Prostate gland (tissue), 2 donors: ENCODE measurements at regions of chr3 and their contacts with region 1.

Region 1: DNA sequence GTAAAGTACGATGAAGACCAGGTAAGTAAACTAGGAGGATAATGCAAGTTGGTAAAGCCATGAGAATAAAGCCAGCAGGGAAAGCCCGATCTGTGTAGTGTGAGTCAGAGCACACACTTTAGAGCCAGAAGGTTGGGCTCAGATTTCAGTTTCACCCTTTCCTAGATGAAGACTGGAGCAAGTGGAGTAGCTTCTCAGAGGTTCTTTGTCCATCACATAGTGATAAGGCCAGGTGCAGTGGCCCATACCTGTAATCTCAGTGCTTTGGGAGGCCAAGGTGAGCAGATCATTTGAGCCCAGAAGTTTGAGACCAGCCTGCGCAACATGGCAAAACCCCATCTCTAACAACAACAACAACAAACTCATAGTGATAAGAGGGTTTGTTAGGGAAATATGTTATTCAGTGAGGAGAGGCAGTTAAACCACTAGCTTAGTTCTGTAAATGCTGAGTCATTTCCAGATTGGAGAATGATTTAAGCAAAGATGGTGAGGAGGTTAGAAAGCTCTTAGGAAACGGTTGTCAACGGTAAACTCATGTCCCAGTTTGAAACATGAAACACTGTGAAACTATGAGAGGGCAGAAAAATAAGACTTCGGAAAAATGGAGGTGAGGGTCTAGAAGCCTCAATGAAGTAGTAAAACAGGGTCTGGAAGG is 39.0 kb downstream of the IL12A start:
- DNase-seq: no peak
- H3K4me3 ChIP-seq: no peak overlapping the region
- H3K27ac ChIP-seq: no peak overlapping the region
- H3K4me1 ChIP-seq: no peaks in the 10 kb centered on the region
- H3K27me3 ChIP-seq: no peaks in the 10 kb centered on the region
- CTCF ChIP-seq: no peak
- POLR2A ChIP-seq: no peak

Region 2: DNA sequence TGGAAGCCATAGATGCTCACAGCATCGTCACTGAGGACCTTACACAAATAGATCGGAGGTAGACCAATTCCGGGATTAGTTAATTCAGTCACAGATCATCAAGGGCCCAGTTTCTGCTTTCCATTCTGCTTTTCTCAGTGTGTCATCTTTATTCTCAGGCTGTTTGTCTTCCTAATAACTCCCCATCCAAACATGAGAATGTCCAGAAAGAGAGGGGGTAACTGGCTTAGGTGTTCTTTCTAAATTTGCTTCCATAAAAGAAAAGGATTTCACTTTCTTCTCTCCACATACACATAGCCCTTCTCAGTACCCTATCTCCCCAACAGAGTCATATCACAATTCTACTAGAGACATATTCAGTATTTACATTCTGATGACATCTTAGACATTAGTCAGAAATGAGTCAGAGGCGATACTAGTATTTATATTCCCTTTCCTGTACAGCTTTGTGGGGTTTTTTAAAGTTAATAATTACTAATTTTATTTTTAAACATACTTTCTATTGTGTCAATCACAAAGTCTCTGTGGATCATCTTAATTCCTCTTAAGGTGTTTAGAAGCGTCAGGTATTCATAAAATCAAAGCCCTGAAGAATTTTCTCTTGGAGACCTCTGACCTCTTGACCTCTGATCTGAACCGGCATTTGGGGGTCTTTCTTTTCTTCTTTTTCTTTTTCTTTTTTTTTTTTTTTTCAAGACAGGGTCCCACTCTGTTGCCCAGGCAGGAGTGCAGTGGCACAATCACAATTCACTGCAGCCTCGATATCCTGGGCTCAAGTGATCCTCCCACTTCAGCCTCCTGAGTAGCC is 63.3 kb before region 1 on chr3:
- intact Hi-C with region 1: no loop called
- DNase-seq: no peak
- H3K4me3 ChIP-seq: no peak overlapping the region
- H3K27ac ChIP-seq: no peak overlapping the region
- H3K4me1 ChIP-seq: no peaks in the 10 kb centered on the region
- H3K27me3 ChIP-seq: no peaks in the 10 kb centered on the region
- CTCF ChIP-seq: no peak
- POLR2A ChIP-seq: no peak

Region 3: DNA sequence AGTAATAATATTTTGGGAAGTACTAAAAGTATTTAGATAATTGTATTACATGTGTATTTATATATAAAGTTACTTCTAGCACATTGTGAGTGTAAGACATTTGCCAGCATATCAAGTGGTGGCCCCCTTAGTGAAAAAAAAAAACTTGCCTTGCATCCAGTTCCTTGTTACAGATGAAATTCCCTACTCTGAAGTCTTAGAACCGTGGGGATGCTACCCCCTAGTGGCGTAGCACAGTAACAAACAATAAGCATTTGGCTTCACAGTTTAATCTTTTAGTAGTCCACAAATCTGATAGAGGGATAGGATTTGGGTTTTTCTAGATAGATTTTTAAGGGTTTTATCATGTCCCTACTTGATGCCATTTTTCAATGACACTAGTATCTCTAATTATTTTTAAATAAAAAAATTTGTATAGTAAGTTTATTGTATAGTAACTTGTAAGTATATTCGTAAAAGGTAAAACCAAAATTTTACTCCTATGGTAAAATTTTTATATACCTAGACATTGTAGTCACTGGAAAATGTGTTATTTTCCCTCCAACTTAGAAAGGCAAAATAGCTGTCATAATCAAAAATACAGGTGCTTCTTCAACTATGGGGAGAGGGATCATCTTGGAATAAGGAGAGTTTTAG is 386.1 kb after region 1 on chr3:
- intact Hi-C with region 1: loop called (anchors 5 kb)
- DNase-seq: peak; percentile 17
- H3K4me3 ChIP-seq: no peak overlapping the region
- H3K27ac ChIP-seq: no peak overlapping the region
- H3K4me1 ChIP-seq: no peaks in the 10 kb centered on the region
- H3K27me3 ChIP-seq: no peaks in the 10 kb centered on the region
- CTCF ChIP-seq: peak; percentile 42 to 74 (median 67)
- POLR2A ChIP-seq: no peak